HepG2 (cell line): ENCODE measurements at regions of chr19 and their contacts with region 1.

Region 1: GRCh38 chr19:36489118-36489919 is at the start of gene ZNF566:
- DNase-seq: peak; percentile 96
- ATAC-seq: peak; percentile 96
- H3K4me3 ChIP-seq: peak within 1 kb of the TSS; percentile 70 to 87 (median 84)
- H3K27ac ChIP-seq: peak within 1 kb of the TSS; percentile 91
- H3K4me1 ChIP-seq: peaks cover 22% of the 10 kb centered on the region
- H3K27me3 ChIP-seq: peaks cover 0 to 4% of the 10 kb centered on the region in 2 experiments; a peak in 1 of 5 replicates
- CTCF ChIP-seq: peak; percentile 42
- EP300 ChIP-seq: no peak
- POLR2A ChIP-seq: peak; percentile 66 to 90
- RAD21 ChIP-seq: no peak; the same call in 1 of the 2 replicates
- total RNA-seq, gene ZNF566: 13.7 and 19.0 TPM in 2 replicates

Region 2: DNA sequence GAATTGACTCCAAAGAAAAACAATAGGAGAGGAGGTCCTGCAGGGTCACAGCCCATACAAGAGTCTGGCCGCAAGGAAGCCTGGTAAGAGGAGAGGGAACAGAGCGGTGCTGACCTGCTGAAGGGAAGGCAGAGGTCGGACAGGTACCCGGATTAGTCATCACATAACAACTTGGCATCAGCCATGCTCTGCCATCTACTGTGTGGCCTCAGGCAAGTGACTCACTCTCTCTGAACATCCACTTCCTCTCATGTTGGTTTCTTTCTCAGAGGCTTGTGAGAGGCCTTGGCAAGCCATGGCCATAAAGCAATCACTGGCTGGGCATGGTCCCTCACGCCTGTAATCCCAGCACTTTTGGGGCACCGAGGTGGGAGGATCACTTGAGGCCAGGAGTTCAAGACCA is 356.8 kb before region 1 on chr19:
- CTCF ChIA-PET with region 1: interaction called, 3 read pairs
- POLR2A ChIA-PET with region 1: interaction called, 8 read pairs
- in situ Hi-C with region 1: no loop called
- intact Hi-C with region 1: loop called (anchors 10 kb)
- DNase-seq: no peak
- ATAC-seq: no peak
- H3K4me3 ChIP-seq: no peak overlapping the region
- H3K27ac ChIP-seq: no peak overlapping the region
- H3K4me1 ChIP-seq: peaks cover 56% of the 10 kb centered on the region
- H3K27me3 ChIP-seq: no peaks in the 10 kb centered on the region
- CTCF ChIP-seq: no peak
- EP300 ChIP-seq: no peak
- POLR2A ChIP-seq: no peak
- RAD21 ChIP-seq: no peak

Region 3: DNA sequence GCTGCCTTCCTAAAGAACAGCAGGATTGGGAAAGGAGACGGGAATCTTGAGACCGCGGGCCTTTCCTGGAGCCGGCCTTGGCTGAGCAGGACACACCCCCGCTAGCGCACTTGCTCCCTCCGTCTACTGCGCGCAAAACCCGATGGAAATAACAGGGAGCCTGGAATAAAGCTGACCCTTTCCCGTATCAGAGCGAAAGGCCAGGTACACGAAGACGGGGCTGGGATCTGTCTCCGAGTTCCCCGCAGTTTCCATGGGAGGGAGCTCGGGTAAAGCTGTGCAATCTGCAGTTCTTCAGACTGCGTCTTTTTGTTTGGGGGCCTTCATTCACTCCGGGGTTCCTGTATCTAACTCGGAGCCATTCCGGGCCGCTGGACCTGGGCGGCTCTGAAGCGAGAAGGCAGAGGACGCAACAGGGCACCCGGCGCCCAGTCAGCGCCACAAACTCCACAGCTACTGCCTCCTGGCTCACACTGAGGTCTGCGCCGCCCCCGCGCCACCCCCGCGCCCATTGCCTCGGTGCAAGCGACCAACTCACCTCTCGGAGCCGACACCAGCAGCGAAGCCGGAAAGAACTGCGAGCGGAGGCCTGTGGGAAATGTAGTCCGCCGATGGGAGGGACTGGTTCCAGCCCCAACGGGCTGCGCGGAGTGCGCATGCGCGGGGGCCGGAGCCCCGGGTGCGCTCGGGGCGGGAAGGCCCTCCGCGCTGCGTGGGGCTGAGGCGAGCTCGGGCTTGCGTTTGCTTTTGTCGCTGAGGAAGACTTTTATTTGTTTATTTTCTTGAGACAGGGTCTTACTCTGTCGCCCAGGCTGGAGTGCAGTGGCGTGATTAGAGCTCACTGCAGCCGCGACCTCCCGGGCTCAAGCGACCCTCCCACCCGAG is 110.5 kb before region 1 on chr19 and contains the start of gene ZFP14:
- CTCF ChIA-PET with region 1: no interaction called
- POLR2A ChIA-PET with region 1: interaction called, 25 read pairs
- in situ Hi-C with region 1: no loop called
- intact Hi-C with region 1: loop called (anchors 2 kb)
- DNase-seq: peak; percentile 91
- ATAC-seq: peak; percentile 95
- H3K4me3 ChIP-seq: peak within 1 kb of the TSS; percentile 68 to 85 (median 81)
- H3K27ac ChIP-seq: peak within 1 kb of the TSS; percentile 83
- H3K4me1 ChIP-seq: peaks cover 20% of the 10 kb centered on the region
- H3K27me3 ChIP-seq: no peaks in the 10 kb centered on the region; a peak in 1 of 5 replicates
- CTCF ChIP-seq: peak; percentile 40
- EP300 ChIP-seq: 0 out of 4 replicates have a peak, but pooled peaks of 1 of the 2 experiments have one; percentile 10
- POLR2A ChIP-seq: peak; percentile 70 to 86
- RAD21 ChIP-seq: peak; percentile 63
- total RNA-seq, gene ZFP14: 5.0 and 5.7 TPM in 2 replicates

Region 4: GRCh38 chr19:36528194-36528920 is 39.0 kb after region 1 on chr19 and contains the start of gene ZNF260:
- CTCF ChIA-PET with region 1: no interaction called
- POLR2A ChIA-PET with region 1: interaction called, 57 read pairs
- in situ Hi-C with region 1: no loop called
- intact Hi-C with region 1: loop called (anchors 2 kb)
- DNase-seq: peak; percentile 95
- ATAC-seq: peak; percentile 96
- H3K4me3 ChIP-seq: peak within 1 kb of the TSS; percentile 73 to 93 (median 85)
- H3K27ac ChIP-seq: peak within 1 kb of the TSS; percentile 86
- H3K4me1 ChIP-seq: peaks cover 18% of the 10 kb centered on the region
- H3K27me3 ChIP-seq: no peaks in the 10 kb centered on the region; a peak in 1 of 5 replicates
- CTCF ChIP-seq: 0 out of 2 replicates have a peak, but pooled peaks have one; percentile 3
- EP300 ChIP-seq: no peak
- POLR2A ChIP-seq: peak; percentile 77 to 90
- RAD21 ChIP-seq: peak; percentile 25; the same call in 1 of the 2 replicates
- total RNA-seq, gene ZNF260: 10.5 and 19.9 TPM in 2 replicates

Region 5: DNA sequence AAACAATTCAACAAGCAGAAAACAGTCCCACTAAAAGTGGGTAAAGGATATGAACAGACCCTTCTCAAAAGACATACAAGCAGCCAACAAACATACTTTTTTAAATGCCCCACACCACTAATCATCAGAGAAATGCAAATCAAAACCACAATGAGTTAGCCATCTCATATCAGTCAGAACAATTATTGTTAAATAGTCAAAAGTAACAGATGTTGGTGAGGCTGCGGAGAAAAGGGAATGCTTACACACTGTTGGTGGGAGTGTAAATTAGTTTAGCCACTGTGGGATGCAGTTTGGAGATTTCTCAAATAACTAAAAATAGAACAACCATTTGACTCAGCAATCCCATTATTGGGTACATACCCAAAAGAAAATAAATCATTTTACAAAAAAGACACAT is 75.1 kb after region 1 on chr19:
- CTCF ChIA-PET with region 1: no interaction called
- POLR2A ChIA-PET with region 1: no interaction called
- in situ Hi-C with region 1: no loop called
- intact Hi-C with region 1: no loop called
- DNase-seq: no peak
- ATAC-seq: no peak
- H3K4me3 ChIP-seq: no peak overlapping the region
- H3K27ac ChIP-seq: no peak overlapping the region
- H3K4me1 ChIP-seq: no peaks in the 10 kb centered on the region
- H3K27me3 ChIP-seq: no peaks in the 10 kb centered on the region
- CTCF ChIP-seq: no peak
- EP300 ChIP-seq: no peak
- POLR2A ChIP-seq: no peak
- RAD21 ChIP-seq: no peak

Region 6: DNA sequence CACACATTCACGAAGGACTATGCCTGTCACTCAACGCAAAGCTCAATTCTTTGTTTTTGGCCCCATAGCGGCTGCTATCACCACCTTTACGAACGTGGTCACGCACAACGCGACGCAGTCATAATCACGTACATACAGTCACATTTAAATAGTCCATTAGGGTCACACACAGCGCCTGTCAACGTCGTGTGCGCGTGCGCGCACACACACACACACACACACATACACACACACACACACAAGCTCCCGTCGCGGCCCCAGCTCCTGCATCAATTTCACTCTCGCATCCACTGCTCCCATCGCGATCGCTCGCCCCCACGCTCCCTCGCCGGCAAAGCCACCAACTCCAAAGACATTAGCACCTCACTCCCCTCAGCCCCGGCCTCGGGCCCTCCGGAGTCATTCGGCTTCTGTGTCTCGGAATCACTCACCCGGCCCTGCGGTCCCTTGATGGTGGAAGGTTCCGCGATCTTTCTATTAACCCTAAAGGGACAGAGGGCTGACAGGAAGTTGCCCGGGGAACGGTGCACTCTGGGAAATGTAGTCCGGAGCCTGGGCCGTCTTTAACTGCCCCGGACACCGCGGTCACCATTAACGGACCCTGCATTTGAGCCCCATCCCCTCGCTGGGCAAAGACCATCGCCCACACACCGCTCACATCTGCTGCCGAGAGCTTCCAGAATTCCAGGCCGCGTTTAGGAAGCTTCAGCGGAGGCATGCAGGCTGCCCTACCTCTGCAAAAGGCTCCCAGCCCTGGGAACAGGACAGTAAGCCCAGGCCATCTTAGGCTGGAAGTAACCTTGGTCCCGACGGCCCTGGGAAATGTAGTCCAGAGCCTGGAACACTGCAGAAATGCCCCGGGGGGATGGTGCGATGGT is 348.8 kb after region 1 on chr19 and contains the start of gene ZNF790:
- CTCF ChIA-PET with region 1: no interaction called
- POLR2A ChIA-PET with region 1: interaction called, 13 read pairs
- in situ Hi-C with region 1: no loop called
- intact Hi-C with region 1: no loop called
- DNase-seq: peak; percentile 89
- ATAC-seq: peak; percentile 96
- H3K4me3 ChIP-seq: peak within 1 kb of the TSS; percentile 77 to 85 (median 84)
- H3K27ac ChIP-seq: peak within 1 kb of the TSS; percentile 86
- H3K4me1 ChIP-seq: peaks cover 19% of the 10 kb centered on the region
- H3K27me3 ChIP-seq: no peaks in the 10 kb centered on the region; a peak in 1 of 5 replicates
- CTCF ChIP-seq: no peak
- EP300 ChIP-seq: 0 out of 4 replicates have a peak, but pooled peaks of 1 of the 2 experiments have one; percentile 16
- POLR2A ChIP-seq: peak; percentile 61 to 78; a peak in 3 of 4 replicates
- RAD21 ChIP-seq: 0 out of 2 replicates have a peak, but pooled peaks have one; percentile 23
- total RNA-seq, gene ZNF790: 5.3 and 8.5 TPM in 2 replicates

Region 7: GRCh38 chr19:37217855-37218591 is 728.7 kb after region 1 on chr19 and contains the start of gene ZNF383:
- CTCF ChIA-PET with region 1: no interaction called
- POLR2A ChIA-PET with region 1: interaction called, 11 read pairs
- in situ Hi-C with region 1: no loop called
- intact Hi-C with region 1: no loop called
- DNase-seq: peak; percentile 92
- ATAC-seq: peak; percentile 99
- H3K4me3 ChIP-seq: peak within 1 kb of the TSS; percentile 85 to 96 (median 88)
- H3K27ac ChIP-seq: peak within 1 kb of the TSS; percentile 89
- H3K4me1 ChIP-seq: peaks cover 12% of the 10 kb centered on the region
- H3K27me3 ChIP-seq: peaks cover 0 to 4% of the 10 kb centered on the region in 2 experiments; a peak in 1 of 5 replicates
- CTCF ChIP-seq: no peak
- EP300 ChIP-seq: no peak
- POLR2A ChIP-seq: peak; percentile 86 to 91
- RAD21 ChIP-seq: peak; percentile 36; the same call in 1 of the 2 replicates
- total RNA-seq, gene ZNF383: 3.7 and 4.1 TPM in 2 replicates